Lower lobe of right lung (tissue), 2 donors: ENCODE measurements at regions of chr6 and their contacts with region 1.

Region 1: DNA sequence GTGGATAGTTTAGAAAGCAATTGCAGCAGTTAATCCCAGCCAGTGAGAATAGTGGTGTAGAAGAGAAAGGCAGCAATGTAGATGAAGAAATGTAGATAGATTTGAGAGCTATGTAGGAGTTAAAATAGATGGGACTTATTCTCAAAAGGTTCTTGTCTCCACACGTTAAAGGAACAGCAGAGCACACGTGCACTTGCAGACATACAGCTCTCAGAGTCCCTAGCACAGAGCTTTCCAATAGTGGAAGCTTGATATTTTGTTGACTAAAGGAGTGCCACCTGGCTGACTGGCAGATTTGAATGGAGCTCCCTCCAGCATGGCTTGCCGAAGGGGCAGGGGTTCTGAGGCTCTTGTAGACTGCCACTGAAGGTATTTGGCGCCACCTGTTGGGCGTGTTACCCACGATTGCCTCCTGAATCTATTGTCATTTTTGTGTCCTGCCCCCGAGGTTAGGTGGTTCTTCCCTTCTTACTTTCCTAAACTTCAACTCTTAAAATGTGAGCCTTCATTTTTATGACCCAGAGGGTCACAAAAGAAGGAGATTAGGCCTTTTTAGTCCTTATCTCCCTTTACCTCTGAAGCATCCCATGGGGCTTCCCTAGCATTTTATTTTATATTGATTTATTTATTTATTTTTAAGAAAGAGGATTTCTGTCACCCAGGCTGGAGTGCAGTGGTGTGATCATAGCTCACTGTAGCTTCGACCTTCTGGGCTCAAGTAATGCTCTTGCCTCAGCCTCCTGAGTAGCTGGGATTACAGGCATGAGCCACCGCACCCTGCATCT is 16.4 kb downstream of the BRD2 start:
- DNase-seq: peak; percentile 95
- ATAC-seq: peak; percentile 91 to 93
- H3K4me3 ChIP-seq: no peak overlapping the region
- H3K27ac ChIP-seq: no peak overlapping the region
- H3K4me1 ChIP-seq: peaks cover 9% of the 10 kb centered on the region
- H3K27me3 ChIP-seq: no peaks in the 10 kb centered on the region
- CTCF ChIP-seq: peak; percentile 90

Region 2: DNA sequence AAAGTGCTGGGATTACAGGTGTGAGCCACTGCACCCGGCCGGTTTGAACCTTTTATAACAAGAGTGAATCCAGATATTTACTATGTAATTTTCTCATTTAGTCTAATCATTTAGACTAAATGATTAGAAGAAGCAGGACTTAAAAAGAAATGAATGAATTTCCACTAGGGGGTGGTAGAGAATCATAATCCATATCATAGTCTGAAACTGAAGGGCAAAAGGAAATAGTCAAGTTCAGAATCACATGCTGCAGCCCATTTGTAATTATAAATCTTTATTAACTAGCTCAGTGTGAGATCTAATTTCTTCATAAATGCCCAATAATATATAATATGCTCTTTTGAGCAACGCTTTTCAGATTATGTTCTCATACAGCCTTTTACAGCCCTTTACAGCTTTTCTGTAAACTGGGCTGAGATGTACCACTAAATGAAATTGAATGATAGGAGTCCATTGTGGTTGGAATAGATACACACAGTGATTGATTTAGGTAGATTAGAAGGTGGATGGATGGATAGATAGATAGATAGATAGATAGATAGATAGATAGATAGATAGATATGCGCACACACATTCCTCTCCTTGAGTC is 99.0 kb before region 1 on chr6:
- intact Hi-C with region 1: loop called (anchors 10 kb)
- DNase-seq: no peak
- ATAC-seq: peak; percentile 60 to 64
- H3K4me3 ChIP-seq: no peak overlapping the region
- H3K27ac ChIP-seq: no peak overlapping the region
- H3K4me1 ChIP-seq: peaks cover 13% of the 10 kb centered on the region
- H3K27me3 ChIP-seq: no peaks in the 10 kb centered on the region
- CTCF ChIP-seq: peak; percentile 61

Region 3: GRCh38 chr6:32933636-32934085 is 51.1 kb before region 1 on chr6:
- intact Hi-C with region 1: loop called (anchors 10 kb)
- DNase-seq: peak; percentile 80
- ATAC-seq: peak; percentile 76 to 87
- H3K4me3 ChIP-seq: no peak overlapping the region
- H3K27ac ChIP-seq: peak overlapping the region; percentile 9
- H3K4me1 ChIP-seq: no peaks in the 10 kb centered on the region
- H3K27me3 ChIP-seq: no peaks in the 10 kb centered on the region
- CTCF ChIP-seq: peak; percentile 85